ENCODE measurements at regions of chr1 and their contacts with region 1.

Region 1: DNA sequence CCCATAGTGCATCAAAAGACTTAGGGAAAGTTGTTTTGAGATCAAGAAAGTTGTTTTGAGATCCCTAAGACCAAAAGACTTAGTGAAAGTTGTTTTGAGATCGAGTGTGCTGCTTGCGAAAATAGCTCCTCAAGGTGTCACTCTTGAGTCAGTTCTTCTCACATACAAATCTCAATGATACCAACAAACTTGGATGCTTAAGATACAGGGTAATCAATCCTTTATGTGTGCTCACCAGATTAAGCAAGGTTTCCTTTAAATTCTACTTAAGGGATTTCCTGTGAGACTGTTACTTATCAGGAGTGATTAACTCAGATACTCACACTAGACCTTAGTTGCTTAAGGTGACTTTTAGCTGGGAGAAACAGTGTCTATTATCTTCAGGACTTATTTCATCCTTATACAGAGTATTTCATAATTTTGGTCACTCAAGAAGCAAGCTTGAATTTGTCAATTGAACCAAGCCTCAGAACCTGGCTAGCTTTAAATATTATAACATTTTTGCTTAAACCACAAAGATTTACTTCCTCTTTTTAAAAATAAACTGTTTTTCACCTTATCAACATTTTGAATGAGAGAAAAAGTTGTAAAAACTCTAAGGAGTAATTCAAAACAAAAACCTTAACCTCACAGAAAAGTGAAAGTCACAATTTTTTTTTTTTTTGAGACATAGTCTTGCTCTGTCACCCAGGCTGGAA is 8.0 kb upstream of the RLF start:
- DNase-seq: peak; percentile 63
- ATAC-seq: peak; percentile 72
- H3K4me3 Mint-ChIP-seq: no peak overlapping the region
- H3K27ac Mint-ChIP-seq: no peak overlapping the region
- H3K4me1 Mint-ChIP-seq: peaks cover 9% of the 10 kb centered on the region
- H3K27me3 Mint-ChIP-seq: peaks cover 11% of the 10 kb centered on the region

Region 2: DNA sequence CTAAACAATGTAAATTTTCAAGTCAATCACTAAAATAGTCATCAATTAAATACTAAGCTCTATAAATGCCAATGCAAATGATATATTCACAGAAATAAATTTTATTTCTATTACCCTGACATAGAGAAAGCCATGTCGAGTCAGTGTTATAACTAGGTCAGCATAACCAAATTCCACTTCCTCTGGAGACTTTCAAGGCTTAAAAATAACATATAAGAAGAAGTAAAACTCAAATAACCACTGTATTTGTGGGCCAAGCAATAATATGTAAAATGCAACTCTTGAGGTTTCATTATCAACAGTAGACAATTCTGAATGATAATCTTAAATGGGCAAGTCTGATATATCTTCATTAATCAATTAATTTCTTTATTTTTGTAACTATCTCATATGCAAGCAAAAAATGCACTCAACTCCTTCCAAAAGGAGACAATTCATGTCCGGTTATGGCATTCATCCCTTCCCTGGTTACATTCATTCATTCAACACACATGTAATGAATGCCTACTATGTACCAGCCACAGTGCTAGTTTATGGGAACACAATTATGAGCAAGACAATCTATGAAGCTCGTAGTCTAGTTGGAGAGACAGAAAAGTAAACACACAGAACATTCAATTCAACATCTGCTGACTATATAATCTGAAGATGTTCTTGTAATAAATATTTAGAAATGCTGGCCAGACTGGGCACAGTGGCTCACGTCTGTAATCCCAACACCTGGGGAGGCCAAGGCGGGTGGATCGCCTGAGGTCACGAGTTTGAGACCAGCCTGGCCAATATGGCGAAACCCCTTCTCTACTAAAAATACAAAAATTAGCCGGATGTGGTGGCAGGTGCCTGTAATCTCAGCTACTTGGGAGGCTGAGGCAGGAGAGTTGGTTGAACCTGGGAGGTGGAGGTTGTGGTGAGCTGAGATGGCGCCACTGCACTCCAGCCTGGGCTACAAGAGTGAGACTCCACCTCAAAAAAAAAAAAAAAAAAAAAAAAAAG is 149.8 kb before region 1 on chr1:
- CTCF ChIA-PET with region 1: no interaction called
- POLR2A ChIA-PET with region 1: no interaction called
- DNase-seq: no peak
- ATAC-seq: no peak
- H3K4me3 Mint-ChIP-seq: no peak overlapping the region
- H3K27ac Mint-ChIP-seq: no peak overlapping the region
- H3K4me1 Mint-ChIP-seq: peaks cover 2% of the 10 kb centered on the region
- H3K27me3 Mint-ChIP-seq: peaks cover 4% of the 10 kb centered on the region

Region 3: DNA sequence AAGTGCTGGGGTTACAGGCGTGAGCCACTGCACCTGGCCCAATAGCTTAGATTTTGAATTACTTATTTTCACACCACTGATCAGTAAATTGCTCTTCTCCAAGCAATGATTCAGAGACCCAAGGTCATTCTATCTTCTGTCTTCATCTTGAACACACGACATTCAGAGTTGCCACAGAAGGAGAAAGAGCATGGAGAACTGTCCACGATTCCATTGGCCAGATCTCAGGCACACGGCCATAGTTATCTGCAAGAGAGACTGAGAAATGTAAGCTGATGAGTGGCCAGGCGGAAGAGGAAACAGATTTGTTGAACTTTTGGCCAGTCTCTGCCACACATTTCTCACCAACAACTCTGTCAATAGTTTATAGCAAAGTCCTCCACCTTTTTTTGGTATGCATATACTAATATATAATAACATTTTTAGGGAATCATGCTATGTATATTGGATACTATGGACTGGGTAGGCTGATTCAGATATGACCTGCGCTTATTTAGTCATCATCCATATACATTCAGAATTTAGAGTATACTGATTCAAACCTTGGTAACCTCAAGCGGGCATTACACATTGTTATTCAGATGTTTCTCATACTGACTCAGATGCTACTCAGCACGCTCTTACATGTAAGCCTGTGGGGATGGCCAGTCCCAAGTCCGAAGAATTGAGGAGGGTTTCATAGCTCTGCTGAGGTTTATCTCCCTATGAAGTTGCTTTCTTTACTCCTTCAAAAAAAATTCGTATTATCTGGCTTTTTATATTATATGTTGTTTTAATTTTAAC is 138.2 kb before region 1 on chr1:
- CTCF ChIA-PET with region 1: no interaction called
- POLR2A ChIA-PET with region 1: no interaction called
- DNase-seq: no peak
- ATAC-seq: no peak
- H3K4me3 Mint-ChIP-seq: no peak overlapping the region
- H3K27ac Mint-ChIP-seq: no peak overlapping the region
- H3K4me1 Mint-ChIP-seq: peaks cover 1% of the 10 kb centered on the region
- H3K27me3 Mint-ChIP-seq: peaks cover 8% of the 10 kb centered on the region

Region 4: DNA sequence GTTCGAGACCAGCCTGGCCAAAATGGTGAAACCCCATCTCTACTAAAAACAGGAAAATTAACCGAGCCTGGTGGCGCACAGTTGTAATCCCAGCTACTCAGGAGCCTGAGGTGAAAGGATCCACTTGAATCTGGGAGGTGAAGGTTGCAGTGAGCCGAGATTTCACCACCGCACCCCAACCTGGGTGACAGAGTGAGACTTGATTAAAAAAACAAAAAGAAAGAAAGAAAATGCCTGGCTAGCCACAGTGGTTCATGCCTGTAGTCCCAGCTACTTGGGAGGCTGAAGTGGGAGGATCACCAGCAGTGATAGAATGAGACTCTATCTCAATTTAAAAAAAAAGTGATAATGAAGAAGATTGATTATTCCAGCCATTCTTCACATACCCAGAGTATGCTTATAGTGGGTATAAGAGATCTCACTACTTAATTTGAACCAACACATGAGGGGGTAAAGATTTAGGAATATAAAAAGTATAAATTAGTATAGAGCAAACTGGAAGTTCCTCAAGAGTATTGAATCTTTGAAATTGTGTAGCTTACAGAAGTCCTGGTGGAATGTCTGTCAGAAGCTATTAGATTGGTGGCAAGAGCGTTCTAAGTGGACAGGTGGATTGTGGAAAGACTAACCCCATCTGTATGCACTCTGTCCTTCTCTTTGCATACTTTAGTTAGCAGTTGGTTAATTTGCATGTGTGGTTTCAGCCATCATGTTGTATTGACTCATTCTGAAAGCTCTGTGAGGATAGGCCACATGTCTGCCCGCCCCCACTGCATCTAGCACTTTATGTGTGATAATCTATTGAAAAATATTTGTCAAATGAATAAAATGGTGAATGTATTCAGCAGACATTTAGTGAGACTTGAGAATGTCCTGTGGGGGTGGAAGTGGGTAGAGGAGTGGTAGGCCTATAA is 33.0 kb after region 1 on chr1:
- CTCF ChIA-PET with region 1: interaction called, 32 read pairs
- POLR2A ChIA-PET with region 1: no interaction called
- DNase-seq: peak; percentile 60
- ATAC-seq: peak; percentile 88
- H3K4me3 Mint-ChIP-seq: no peak overlapping the region
- H3K27ac Mint-ChIP-seq: peak overlapping the region; percentile 19
- H3K4me1 Mint-ChIP-seq: peaks cover 46% of the 10 kb centered on the region
- H3K27me3 Mint-ChIP-seq: no peaks in the 10 kb centered on the region

Region 5: DNA sequence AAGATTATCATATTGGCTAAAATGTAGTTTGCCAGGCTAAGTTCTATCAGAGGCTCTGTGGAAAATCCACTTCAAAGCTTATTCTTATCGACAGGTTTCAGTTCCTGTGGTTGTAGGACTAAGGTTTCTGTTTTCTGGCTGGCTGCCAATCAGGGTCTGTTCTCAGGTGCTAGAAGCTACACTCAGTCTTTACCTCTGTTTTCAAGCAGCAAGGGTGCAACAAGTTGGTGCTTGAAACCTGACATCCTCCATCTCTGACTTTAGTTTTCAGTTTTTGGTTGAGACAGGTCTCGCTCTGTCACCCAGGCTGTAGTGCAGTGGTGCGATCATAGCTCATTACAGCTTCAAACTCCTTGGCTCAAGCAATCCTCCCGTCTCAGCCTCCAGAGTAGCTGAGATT is 79.2 kb after region 1 on chr1:
- CTCF ChIA-PET with region 1: interaction called, 14 read pairs
- POLR2A ChIA-PET with region 1: interaction called, 3 read pairs
- DNase-seq: peak; percentile 91
- ATAC-seq: peak; percentile 98
- H3K4me3 Mint-ChIP-seq: peak overlapping the region; percentile 36
- H3K27ac Mint-ChIP-seq: peak overlapping the region; percentile 83
- H3K4me1 Mint-ChIP-seq: peaks cover 38% of the 10 kb centered on the region
- H3K27me3 Mint-ChIP-seq: no peaks in the 10 kb centered on the region

Region 6: DNA sequence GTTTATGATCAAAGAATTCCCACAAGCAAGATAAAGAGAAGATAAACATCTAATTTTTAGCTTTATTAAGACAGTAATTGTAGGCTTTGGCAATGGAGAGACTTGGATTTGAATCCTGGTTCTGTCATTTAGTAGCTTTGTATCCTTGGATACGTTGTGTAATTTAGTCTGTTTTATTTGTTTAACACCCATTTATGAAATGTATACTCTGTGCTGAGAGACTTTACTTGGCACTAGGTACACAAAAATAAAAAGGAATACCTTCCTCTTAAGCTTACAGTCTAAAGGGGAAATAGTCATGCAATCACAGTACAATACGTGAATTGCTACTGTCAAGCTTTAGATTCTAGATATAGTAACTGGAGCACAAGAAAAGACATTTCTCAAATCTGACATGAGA is 128.6 kb after region 1 on chr1:
- CTCF ChIA-PET with region 1: interaction called, 19 read pairs
- POLR2A ChIA-PET with region 1: no interaction called
- DNase-seq: no peak
- ATAC-seq: no peak
- H3K4me3 Mint-ChIP-seq: no peak overlapping the region
- H3K27ac Mint-ChIP-seq: no peak overlapping the region
- H3K4me1 Mint-ChIP-seq: peaks cover 3% of the 10 kb centered on the region
- H3K27me3 Mint-ChIP-seq: no peaks in the 10 kb centered on the region

Region 7: DNA sequence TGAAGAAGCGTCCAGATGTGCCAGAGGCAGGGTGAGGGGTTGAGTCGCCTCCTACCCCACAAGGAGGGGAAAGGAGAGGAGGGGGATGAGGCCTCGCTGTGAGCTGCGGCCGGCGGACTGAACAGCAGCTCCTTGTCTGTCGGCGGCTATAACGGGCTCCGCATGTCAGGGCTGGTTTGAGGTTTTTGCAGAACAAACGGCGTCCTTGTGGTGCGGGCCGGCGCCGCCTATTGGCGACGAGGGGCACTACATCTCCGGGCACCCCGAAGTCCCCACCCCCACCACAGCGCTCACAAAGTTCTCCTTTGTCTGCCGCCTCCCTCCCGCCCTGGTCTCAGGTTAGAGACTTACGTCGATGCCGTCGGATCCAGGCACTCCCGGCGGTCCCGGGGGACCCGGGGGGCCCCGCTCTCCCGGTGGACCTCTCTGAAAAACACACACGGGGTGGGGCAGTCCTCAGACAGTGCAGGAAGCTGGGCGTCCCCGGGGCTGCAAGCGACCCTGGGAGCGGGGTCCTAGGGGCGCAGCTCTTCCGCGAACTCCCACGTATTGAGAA is 162.1 kb after region 1 on chr1:
- CTCF ChIA-PET with region 1: interaction called, 147 read pairs
- POLR2A ChIA-PET with region 1: interaction called, 6 read pairs
- DNase-seq: peak; percentile 90
- ATAC-seq: peak; percentile 80
- H3K4me3 Mint-ChIP-seq: peak overlapping the region; percentile 74
- H3K27ac Mint-ChIP-seq: no peak overlapping the region
- H3K4me1 Mint-ChIP-seq: peaks cover 52% of the 10 kb centered on the region
- H3K27me3 Mint-ChIP-seq: peaks cover 27% of the 10 kb centered on the region